T-cell (primary cell): ENCODE measurements at regions of chr7 and their contacts with region 1.

Region 1: DNA sequence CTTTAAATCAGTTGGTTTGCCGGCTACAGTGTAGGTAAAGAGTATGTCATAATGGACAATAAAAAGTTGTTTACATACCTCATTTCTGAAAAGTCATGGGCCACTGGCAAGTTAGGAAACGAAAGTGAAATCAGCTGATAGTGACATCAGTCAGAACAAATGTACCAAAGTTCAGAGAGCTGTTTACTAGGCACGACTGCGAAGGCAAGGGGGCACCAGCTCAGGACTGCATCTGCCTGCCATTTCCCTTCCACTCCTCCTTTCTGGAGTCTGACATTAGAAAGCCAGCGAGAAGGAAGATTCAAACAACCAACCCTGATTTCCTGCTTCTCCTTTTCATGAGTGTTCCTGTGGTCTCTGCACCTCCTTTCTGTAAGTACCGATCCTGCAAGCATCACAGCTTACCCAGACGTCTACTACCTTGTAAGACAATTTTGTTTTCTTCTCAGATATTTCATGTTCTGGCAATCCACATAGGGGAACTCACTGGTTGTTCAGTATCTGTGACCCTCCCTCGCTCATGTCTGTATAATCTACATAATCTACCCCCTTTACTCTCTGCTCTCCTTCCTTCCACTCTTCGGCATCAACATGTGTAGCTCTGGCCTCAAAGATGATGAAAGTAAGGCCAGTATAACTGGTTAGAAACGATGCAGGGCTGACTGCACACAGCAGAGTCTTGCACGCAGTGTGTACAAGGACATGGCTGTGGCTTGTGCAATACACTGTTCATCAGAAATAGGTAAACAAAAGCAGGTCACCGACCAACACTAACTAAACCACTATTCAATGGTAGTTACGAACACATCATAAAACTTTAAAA is at the start of gene TMEM140:
- DNase-seq: peak in 34 of 35 experiments; percentile 47 to 85 (median 64)
- ATAC-seq: peak; percentile 79 to 86 (median 82)
- H3K4me3 ChIP-seq: peak within 1 kb of the TSS; percentile 60 to 90
- H3K4me3 Mint-ChIP-seq: peak within 1 kb of the TSS; percentile 85 to 89 (median 88)
- H3K27ac ChIP-seq: peak within 1 kb of the TSS; percentile 95
- H3K27ac Mint-ChIP-seq: peak within 1 kb of the TSS; percentile 96 to 97
- H3K4me1 ChIP-seq: peaks cover 24% of the 10 kb centered on the region in 2 experiments
- H3K4me1 Mint-ChIP-seq: peaks cover 64 to 82% (median 68%) of the 10 kb centered on the region in 3 donors
- H3K27me3 ChIP-seq: no peaks in the 10 kb centered on the region
- H3K27me3 Mint-ChIP-seq: no peaks in the 10 kb centered on the region
- total RNA-seq, gene TMEM140: 20.7 to 32.7 (median 25.8) TPM

Region 2: GRCh38 chr7:134986363-134987251 is 161.5 kb before region 1 on chr7 and contains the start of gene AGBL3:
- CTCF ChIA-PET with region 1: interaction called in 1 of 2 experiments, 47 read pairs
- POLR2A ChIA-PET with region 1: interaction called in 1 of 2 experiments, 8 read pairs
- DNase-seq: peak; percentile 74 to 92 (median 86)
- ATAC-seq: peak; percentile 90 to 93 (median 93)
- H3K4me3 ChIP-seq: peak within 1 kb of the TSS; percentile 89 to 96
- H3K4me3 Mint-ChIP-seq: peak within 1 kb of the TSS; percentile 98 to 99 (median 99)
- H3K27ac ChIP-seq: peak within 1 kb of the TSS; percentile 94
- H3K27ac Mint-ChIP-seq: peak within 1 kb of the TSS; percentile 96 to 99
- H3K4me1 ChIP-seq: peaks cover under 1 to 32% of the 10 kb centered on the region in 2 experiments
- H3K4me1 Mint-ChIP-seq: peaks cover 35 to 48% (median 48%) of the 10 kb centered on the region in 3 donors
- H3K27me3 ChIP-seq: no peaks in the 10 kb centered on the region
- H3K27me3 Mint-ChIP-seq: no peaks in the 10 kb centered on the region
- total RNA-seq, gene AGBL3: 2.5 to 6.7 (median 3.5) TPM

Region 3: GRCh38 chr7:135170274-135170997 is 22.3 kb after region 1 on chr7 and contains the start of gene CYREN:
- CTCF ChIA-PET with region 1: interaction called, 10 to 21 read pairs
- POLR2A ChIA-PET with region 1: interaction called in 1 of 2 experiments, 26 read pairs
- DNase-seq: peak; percentile 71 to 93 (median 85)
- ATAC-seq: peak; percentile 83 to 85 (median 84)
- H3K4me3 ChIP-seq: peak within 1 kb of the TSS; percentile 73 to 89
- H3K4me3 Mint-ChIP-seq: peak within 1 kb of the TSS; percentile 85 to 89 (median 85)
- H3K27ac ChIP-seq: peak within 1 kb of the TSS; percentile 98
- H3K27ac Mint-ChIP-seq: peak within 1 kb of the TSS; percentile 96 to 97
- H3K4me1 ChIP-seq: peaks cover 10 to 54% of the 10 kb centered on the region in 2 experiments
- H3K4me1 Mint-ChIP-seq: peaks cover 55 to 59% (median 59%) of the 10 kb centered on the region in 3 donors
- H3K27me3 ChIP-seq: no peaks in the 10 kb centered on the region
- H3K27me3 Mint-ChIP-seq: no peaks in the 10 kb centered on the region
- total RNA-seq, gene CYREN: 24.3 to 46.4 (median 44.6) TPM

Region 4: GRCh38 chr7:135204341-135204749 is 56.2 kb after region 1 on chr7:
- CTCF ChIA-PET with region 1: interaction called in 1 of 2 experiments, 3 read pairs
- POLR2A ChIA-PET with region 1: interaction called in 1 of 2 experiments, 13 read pairs
- DNase-seq: no peak
- ATAC-seq: no peak
- H3K4me3 ChIP-seq: no peak overlapping the region
- H3K4me3 Mint-ChIP-seq: no peak overlapping the region
- H3K27ac ChIP-seq: no peak overlapping the region
- H3K27ac Mint-ChIP-seq: no peak overlapping the region
- H3K4me1 ChIP-seq: peaks cover 0 to 15% of the 10 kb centered on the region in 2 experiments
- H3K4me1 Mint-ChIP-seq: peaks cover 39 to 57% (median 43%) of the 10 kb centered on the region in 3 donors
- H3K27me3 ChIP-seq: no peaks in the 10 kb centered on the region
- H3K27me3 Mint-ChIP-seq: no peaks in the 10 kb centered on the region